ENCODE measurements at regions of chr12 and their contacts with region 1.

Region 1: DNA sequence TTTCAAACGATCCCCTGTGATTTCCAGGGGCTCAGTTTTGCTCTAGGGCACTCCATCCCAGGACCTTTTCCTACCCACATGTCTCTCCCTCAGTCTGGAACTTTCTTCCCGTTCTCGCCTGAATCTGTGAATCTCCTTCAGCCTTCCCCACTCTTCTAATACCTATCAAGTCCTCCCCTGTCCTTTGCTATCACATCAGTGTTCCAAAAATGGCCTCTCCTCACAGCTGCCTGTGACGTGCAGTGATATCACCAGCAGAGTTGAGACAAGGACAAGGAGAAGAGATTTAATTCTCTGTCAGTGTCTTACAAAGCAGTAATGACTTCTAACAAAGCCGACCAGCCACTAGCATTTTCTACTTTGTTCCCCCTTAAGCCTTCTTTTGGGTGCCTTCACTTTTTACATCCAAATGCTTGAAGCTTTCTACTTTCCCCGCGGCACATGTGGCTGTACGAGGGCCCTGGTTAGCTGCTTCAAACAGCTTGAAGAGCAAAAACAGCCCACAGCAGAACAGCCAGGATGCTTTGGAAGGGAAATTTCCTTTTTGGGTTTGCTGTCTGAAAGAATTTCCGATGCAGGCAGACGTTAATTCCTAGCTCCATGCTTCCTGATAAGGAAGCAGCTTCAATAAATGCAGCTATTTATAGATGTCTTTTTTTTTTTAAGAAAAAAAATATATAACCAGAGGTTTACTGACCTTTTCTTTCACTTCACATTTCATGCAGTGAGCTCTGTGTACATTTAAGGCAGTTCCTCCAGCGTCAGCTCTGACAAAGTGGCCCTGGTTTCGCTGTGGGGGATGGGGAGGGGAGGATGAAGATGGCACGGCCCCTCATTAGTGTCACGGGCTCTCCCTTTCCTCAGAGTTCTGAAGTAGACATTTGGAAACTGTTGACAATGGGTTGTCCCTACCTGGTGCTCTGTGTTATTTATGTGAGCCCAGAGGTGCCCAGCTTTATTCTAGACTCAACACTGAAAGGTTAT is 109.3 kb downstream of the ETV6 start:
- DNase-seq: no peak
- H3K4me3 Mint-ChIP-seq: no peak overlapping the region
- H3K27ac Mint-ChIP-seq: peak overlapping the region; percentile 49
- H3K4me1 Mint-ChIP-seq: peaks cover 75% of the 10 kb centered on the region
- H3K27me3 Mint-ChIP-seq: no peaks in the 10 kb centered on the region

Region 2: DNA sequence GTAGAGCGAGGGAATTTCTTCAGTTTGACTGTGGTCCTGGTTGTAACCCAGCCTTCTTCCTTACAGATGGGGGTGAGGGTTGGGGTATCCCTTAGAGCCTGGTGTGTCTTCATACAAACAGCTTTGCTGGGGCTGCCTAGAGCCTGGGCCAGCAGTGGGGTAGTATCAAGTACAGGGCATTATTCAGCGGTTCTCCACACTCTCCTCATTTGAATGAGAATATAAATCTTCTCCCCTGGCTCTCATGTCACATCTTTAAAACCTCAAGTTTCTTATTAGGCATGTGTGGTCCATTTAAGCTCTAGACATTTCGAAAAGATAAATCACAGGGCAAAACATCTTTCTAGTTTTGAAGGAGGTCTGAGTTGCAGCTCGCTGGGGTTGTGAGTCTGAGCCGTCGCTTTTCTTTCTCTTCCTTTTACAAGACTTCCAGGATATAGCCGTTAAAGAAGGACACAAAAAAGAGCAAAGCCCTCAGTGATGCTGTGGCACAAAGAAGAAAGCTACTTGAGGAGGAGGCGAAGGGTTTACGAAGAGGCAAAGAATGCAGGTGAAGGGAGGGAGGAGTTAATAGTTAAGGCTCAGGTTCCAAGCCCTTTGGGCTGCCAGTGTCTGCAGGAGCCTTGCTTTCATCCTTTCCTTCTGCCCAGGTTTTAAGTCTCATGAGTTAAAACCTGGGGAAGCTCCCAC is 15.3 kb before region 1 on chr12:
- intact Hi-C with region 1: loop called (anchors 2 kb)
- DNase-seq: no peak
- H3K4me3 Mint-ChIP-seq: no peak overlapping the region
- H3K27ac Mint-ChIP-seq: peak overlapping the region; percentile 29
- H3K4me1 Mint-ChIP-seq: peaks cover 74% of the 10 kb centered on the region
- H3K27me3 Mint-ChIP-seq: no peaks in the 10 kb centered on the region